Activated naive CD4-positive, alpha-beta T cell treated with anti-CD3 and anti-CD28 coated beads, Interleukin-2, amount 10 ng/mL, durations not matched to agents 7 days and 5 days (primary cell): ENCODE measurements at regions of chr2 and their contacts with region 1.

Region 1: DNA sequence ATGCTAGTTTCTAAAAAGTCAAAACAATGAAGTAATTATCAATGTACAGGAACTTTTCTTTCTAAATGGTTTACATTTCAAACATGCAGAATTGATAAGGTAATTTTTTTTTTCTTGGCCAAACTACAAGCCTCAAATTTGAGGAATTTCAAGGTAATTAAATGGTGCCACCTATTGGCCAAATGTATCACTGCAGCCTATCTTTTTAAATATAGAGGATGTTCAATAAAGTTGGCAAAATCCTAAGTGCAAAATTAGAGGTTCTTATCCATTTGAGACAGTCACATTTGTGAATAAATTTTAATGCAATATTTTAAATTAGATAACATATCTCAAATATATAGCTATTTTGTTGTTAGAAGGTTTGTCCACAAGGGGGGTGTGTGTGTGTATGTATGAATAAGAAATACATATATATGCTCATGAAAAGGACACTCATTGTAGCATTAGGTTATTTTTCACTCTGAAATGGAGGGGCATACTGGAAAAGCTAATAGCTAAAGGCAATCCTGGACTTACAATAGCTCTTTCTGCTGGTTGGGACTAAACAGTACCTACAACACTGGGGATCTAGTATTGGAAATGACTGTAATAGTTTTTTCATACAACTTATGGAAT is 26.2 kb downstream of the MMADHC start:
- DNase-seq: no peak
- H3K4me3 Mint-ChIP-seq: no peak overlapping the region
- H3K27ac Mint-ChIP-seq: no peak overlapping the region
- H3K4me1 Mint-ChIP-seq: no peaks in the 10 kb centered on the region
- H3K27me3 Mint-ChIP-seq: peaks cover 14% of the 10 kb centered on the region

Region 2: GRCh38 chr2:149017116-149017985 is 544.1 kb before region 1 on chr2:
- CTCF ChIA-PET with region 1: interaction called, 42 read pairs
- DNase-seq: peak; percentile 84
- H3K4me3 Mint-ChIP-seq: no peak overlapping the region
- H3K27ac Mint-ChIP-seq: no peak overlapping the region
- H3K4me1 Mint-ChIP-seq: no peaks in the 10 kb centered on the region
- H3K27me3 Mint-ChIP-seq: no peaks in the 10 kb centered on the region

Region 3: DNA sequence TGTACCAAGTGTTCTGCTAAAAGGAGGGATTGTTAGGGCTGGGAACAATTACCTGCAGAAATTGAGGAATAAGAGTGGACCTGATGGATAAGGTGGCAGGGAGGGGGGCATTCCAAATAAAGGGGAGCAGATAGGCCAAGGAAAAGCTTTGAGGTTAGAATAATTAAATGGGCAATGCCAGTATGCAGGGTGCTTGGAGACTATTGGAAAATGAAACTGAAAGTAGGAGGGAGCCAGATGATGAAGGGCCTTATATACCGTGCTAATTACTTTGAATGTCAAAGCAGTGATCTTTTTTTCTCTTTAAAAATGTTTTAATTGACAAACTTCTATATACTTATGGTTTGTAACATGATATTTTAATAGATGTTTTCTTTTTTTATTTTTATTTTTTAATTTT is 16.7 kb before region 1 on chr2:
- CTCF ChIA-PET with region 1: no interaction called
- DNase-seq: no peak
- H3K4me3 Mint-ChIP-seq: no peak overlapping the region
- H3K27ac Mint-ChIP-seq: no peak overlapping the region
- H3K4me1 Mint-ChIP-seq: peaks cover 7% of the 10 kb centered on the region
- H3K27me3 Mint-ChIP-seq: peaks cover 5% of the 10 kb centered on the region